ENCODE measurements at regions of chr9 and their contacts with region 1.

Region 1: GRCh38 chr9:806285-807156 is 35.0 kb upstream of the DMRT1 start:
- DNase-seq: peak in 1 of 2 experiments; percentile 2
- H3K4me3 ChIP-seq: no peak overlapping the region
- H3K27ac ChIP-seq: no peak overlapping the region
- H3K4me1 ChIP-seq: no peaks in the 10 kb centered on the region
- H3K27me3 ChIP-seq: no peaks in the 10 kb centered on the region
- CTCF ChIP-seq: peak; percentile 71

Region 2: GRCh38 chr9:347667-348292 is 458.7 kb before region 1 on chr9:
- CTCF ChIA-PET with region 1: no interaction called
- POLR2A ChIA-PET with region 1: no interaction called
- intact Hi-C with region 1: loop called (anchors 2 kb)
- DNase-seq: no peak
- H3K4me3 ChIP-seq: no peak overlapping the region
- H3K27ac ChIP-seq: no peak overlapping the region
- H3K4me1 ChIP-seq: no peaks in the 10 kb centered on the region
- H3K27me3 ChIP-seq: no peaks in the 10 kb centered on the region
- CTCF ChIP-seq: peak; percentile 76

Region 3: GRCh38 chr9:385818-386398 is 420.6 kb before region 1 on chr9:
- CTCF ChIA-PET with region 1: no interaction called
- POLR2A ChIA-PET with region 1: interaction called, 3 read pairs
- intact Hi-C with region 1: loop called (anchors 1 kb)
- DNase-seq: peak; percentile 47 to 52
- H3K4me3 ChIP-seq: no peak overlapping the region
- H3K27ac ChIP-seq: no peak overlapping the region
- H3K4me1 ChIP-seq: no peaks in the 10 kb centered on the region
- H3K27me3 ChIP-seq: no peaks in the 10 kb centered on the region
- CTCF ChIP-seq: peak; percentile 93

Region 4: GRCh38 chr9:394347-395052 is 412.0 kb before region 1 on chr9:
- CTCF ChIA-PET with region 1: interaction called, 12 read pairs
- POLR2A ChIA-PET with region 1: no interaction called
- intact Hi-C with region 1: no loop called
- DNase-seq: no peak
- H3K4me3 ChIP-seq: no peak overlapping the region
- H3K27ac ChIP-seq: no peak overlapping the region
- H3K4me1 ChIP-seq: no peaks in the 10 kb centered on the region
- H3K27me3 ChIP-seq: no peaks in the 10 kb centered on the region
- CTCF ChIP-seq: no peak

Region 5: GRCh38 chr9:757246-757881 is 49.2 kb before region 1 on chr9:
- CTCF ChIA-PET with region 1: no interaction called
- POLR2A ChIA-PET with region 1: no interaction called
- intact Hi-C with region 1: loop called (anchors 2 kb)
- DNase-seq: no peak
- H3K4me3 ChIP-seq: no peak overlapping the region
- H3K27ac ChIP-seq: no peak overlapping the region
- H3K4me1 ChIP-seq: 0 out of 2 replicates have a peak, but pooled peaks cover 6% of the 10 kb centered on the region
- H3K27me3 ChIP-seq: no peaks in the 10 kb centered on the region
- CTCF ChIP-seq: peak; percentile 44; the same call in 1 of the 2 replicates

Region 6: DNA sequence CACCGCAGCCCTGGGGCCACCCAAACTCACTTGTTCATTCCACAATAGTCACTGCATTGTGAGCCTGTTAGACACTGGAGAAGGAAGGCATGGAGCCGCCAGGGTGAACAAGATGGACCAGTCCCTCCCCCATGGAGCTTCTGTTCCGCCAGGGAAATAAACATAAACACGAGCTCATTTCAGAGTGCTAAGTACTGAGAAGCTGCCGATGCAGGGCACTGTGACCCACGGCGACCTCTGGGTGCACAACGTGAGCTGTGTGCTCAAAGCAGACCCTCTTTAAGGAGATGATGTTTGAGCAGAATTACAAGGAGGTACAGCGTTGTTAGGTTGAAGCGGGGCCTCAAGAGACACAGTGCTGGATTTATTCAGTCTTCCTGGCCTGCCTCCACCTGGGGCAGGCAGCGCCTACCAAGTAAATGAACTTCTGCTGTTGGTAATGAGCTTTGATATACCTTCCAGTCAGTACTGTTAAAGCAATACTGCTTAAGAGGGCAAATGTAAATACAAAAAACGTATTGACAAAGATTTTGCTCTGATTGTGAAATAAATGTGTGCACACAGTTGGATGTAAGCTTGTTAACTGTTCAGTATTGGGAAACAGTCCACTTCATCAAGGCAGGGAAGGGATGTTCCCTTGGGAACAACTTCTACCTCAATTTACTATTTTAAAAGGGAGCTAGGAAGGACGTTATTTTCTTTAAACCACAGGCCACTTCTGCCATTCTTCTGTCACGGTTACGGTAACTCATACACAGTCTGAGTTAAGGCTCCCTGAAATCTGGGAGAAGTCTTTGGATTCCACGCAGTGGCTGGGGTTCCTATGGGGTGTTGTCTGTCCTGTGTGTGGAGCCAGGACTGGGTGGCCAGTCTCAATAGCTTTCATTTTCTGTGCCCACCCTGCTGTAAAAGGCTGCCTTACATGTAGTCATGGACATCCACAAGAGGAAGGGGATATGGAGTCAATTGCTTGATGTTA is 13.9 kb before region 1 on chr9:
- CTCF ChIA-PET with region 1: no interaction called
- POLR2A ChIA-PET with region 1: no interaction called
- intact Hi-C with region 1: no loop called
- DNase-seq: no peak
- H3K4me3 ChIP-seq: no peak overlapping the region
- H3K27ac ChIP-seq: no peak overlapping the region
- H3K4me1 ChIP-seq: no peaks in the 10 kb centered on the region
- H3K27me3 ChIP-seq: no peaks in the 10 kb centered on the region
- CTCF ChIP-seq: no peak

Region 7: GRCh38 chr9:1009101-1009707 is 202.7 kb after region 1 on chr9:
- CTCF ChIA-PET with region 1: no interaction called
- POLR2A ChIA-PET with region 1: no interaction called
- intact Hi-C with region 1: loop called (anchors 2 kb)
- DNase-seq: peak; percentile 38 to 64
- H3K4me3 ChIP-seq: no peak overlapping the region
- H3K27ac ChIP-seq: no peak overlapping the region
- H3K4me1 ChIP-seq: no peaks in the 10 kb centered on the region
- H3K27me3 ChIP-seq: no peaks in the 10 kb centered on the region
- CTCF ChIP-seq: peak; percentile 90